ENCODE measurements at regions of chr16 and their contacts with region 1.

Region 1: GRCh38 chr16:67082891-67083290 is 26.9 kb upstream of the PHAF1 start:
- DNase-seq: no peak
- H3K4me3 Mint-ChIP-seq: no peak overlapping the region
- H3K27ac Mint-ChIP-seq: no peak overlapping the region
- H3K4me1 Mint-ChIP-seq: peaks cover 11% of the 10 kb centered on the region
- H3K27me3 Mint-ChIP-seq: no peaks in the 10 kb centered on the region

Region 2: GRCh38 chr16:66894948-66895688 is 187.8 kb before region 1 on chr16:
- CTCF ChIA-PET with region 1: no interaction called
- POLR2A ChIA-PET with region 1: no interaction called
- DNase-seq: peak; percentile 78
- H3K4me3 Mint-ChIP-seq: no peak overlapping the region
- H3K27ac Mint-ChIP-seq: peak overlapping the region; percentile 15
- H3K4me1 Mint-ChIP-seq: peaks cover 23% of the 10 kb centered on the region
- H3K27me3 Mint-ChIP-seq: no peaks in the 10 kb centered on the region

Region 3: GRCh38 chr16:67068212-67068753 is 14.6 kb before region 1 on chr16:
- CTCF ChIA-PET with region 1: interaction called, 11 read pairs
- POLR2A ChIA-PET with region 1: no interaction called
- DNase-seq: no peak
- H3K4me3 Mint-ChIP-seq: no peak overlapping the region
- H3K27ac Mint-ChIP-seq: no peak overlapping the region
- H3K4me1 Mint-ChIP-seq: peaks cover 9% of the 10 kb centered on the region
- H3K27me3 Mint-ChIP-seq: no peaks in the 10 kb centered on the region

Region 4: DNA sequence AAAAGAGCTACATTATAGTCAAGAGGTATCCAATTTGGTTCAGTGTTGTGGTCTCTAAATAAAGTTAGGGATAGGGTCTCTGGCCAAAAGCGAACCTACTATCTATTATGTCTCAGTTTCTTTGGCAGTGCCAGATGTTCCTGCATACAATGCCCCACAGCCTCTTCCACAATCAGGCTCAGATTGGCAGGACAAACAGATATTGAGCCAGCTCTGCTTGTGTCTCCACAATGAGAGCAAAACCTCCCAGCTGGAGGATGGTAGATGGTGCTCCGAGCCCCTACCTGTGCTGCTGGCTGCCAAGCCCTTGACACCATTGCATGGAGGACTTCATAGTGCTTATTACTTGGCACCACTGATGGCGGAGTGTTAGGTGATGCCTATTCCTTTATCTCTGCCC is 46.5 kb after region 1 on chr16:
- CTCF ChIA-PET with region 1: no interaction called
- POLR2A ChIA-PET with region 1: no interaction called
- DNase-seq: no peak
- H3K4me3 Mint-ChIP-seq: no peak overlapping the region
- H3K27ac Mint-ChIP-seq: no peak overlapping the region
- H3K4me1 Mint-ChIP-seq: no peaks in the 10 kb centered on the region
- H3K27me3 Mint-ChIP-seq: no peaks in the 10 kb centered on the region

Measured in activated CD4-positive, alpha-beta T cell treated with anti-CD3 and anti-CD28 coated beads, Interleukin-2, amount 10 ng/mL, durations not matched to agents 7 days and 5 days (primary cell).